ENCODE measurements at regions of chr1 and their contacts with region 1.

Region 1: DNA sequence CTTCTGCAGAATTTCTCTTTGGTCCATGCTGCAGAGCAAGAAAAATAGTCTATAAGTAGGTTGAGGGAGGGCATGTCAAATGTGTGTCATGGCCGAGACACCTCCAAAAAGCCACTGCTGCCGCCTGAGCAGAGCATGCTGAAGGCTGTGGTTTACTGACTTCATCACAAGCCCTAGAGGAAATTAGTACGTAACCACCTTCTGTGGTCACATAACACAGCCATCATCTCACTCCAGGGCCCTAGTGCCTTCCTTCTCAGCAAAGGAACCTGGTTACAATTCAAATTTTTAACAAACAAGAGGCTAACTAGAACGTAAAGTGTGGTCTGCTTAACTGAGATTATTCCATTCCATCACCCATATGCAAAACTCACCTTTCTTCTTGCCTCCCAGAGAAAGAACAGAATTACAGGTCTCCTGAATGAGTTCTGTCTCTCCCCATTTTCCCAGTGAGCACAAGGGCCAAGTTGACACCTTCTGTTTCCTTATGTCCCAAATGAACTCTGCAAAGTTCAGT is at the start of gene PTPN22:
- DNase-seq: peak; percentile 41 to 91 (median 87)
- ATAC-seq: peak; percentile 98
- H3K4me3 ChIP-seq: peak within 1 kb of the TSS; percentile 81
- H3K4me3 Mint-ChIP-seq: peak within 1 kb of the TSS; percentile 82 to 95 (median 92)
- H3K27ac ChIP-seq: peak within 1 kb of the TSS; percentile 87
- H3K27ac Mint-ChIP-seq: peak within 1 kb of the TSS; percentile 94 to 99 (median 98)
- H3K4me1 ChIP-seq: peaks cover 30 to 65% of the 10 kb centered on the region in 2 donors
- H3K4me1 Mint-ChIP-seq: peaks cover 37 to 77% (median 72%) of the 10 kb centered on the region in 7 donors
- H3K27me3 ChIP-seq: no peaks in the 10 kb centered on the region
- H3K27me3 Mint-ChIP-seq: no peaks in the 10 kb centered on the region
- total RNA-seq, gene PTPN22: 22.2 to 76.7 (median 27.5) TPM

Region 2: GRCh38 chr1:113849060-113849459 is 22.6 kb before region 1 on chr1:
- CTCF ChIA-PET with region 1: interaction called, 3 read pairs
- POLR2A ChIA-PET with region 1: no interaction called
- intact Hi-C with region 1: loop called in 1 of 2 experiments (anchors 2 kb)
- DNase-seq: no peak
- ATAC-seq: no peak
- H3K4me3 ChIP-seq: no peak overlapping the region
- H3K4me3 Mint-ChIP-seq: no peak overlapping the region
- H3K27ac ChIP-seq: no peak overlapping the region
- H3K27ac Mint-ChIP-seq: no peak overlapping the region
- H3K4me1 ChIP-seq: peaks cover 8 to 10% of the 10 kb centered on the region in 2 donors
- H3K4me1 Mint-ChIP-seq: peaks cover 8 to 16% (median 14%) of the 10 kb centered on the region in 7 donors
- H3K27me3 ChIP-seq: no peaks in the 10 kb centered on the region
- H3K27me3 Mint-ChIP-seq: no peaks in the 10 kb centered on the region

Region 3: GRCh38 chr1:113887402-113888175 is 15.9 kb after region 1 on chr1 and contains the start of gene BCL2L15:
- CTCF ChIA-PET with region 1: interaction called, 4 read pairs
- POLR2A ChIA-PET with region 1: interaction called, 5 read pairs
- intact Hi-C with region 1: loop called (anchors 1 to 2 kb)
- DNase-seq: no peak
- ATAC-seq: no peak
- H3K4me3 ChIP-seq: no peak within 1 kb of the TSS
- H3K4me3 Mint-ChIP-seq: peak within 1 kb of the TSS in 9 of 10 donors; percentile 8 to 73 (median 52)
- H3K27ac ChIP-seq: peak within 1 kb of the TSS; percentile 9
- H3K27ac Mint-ChIP-seq: peak within 1 kb of the TSS in 8 of 9 donors; percentile 11 to 72 (median 54)
- H3K4me1 ChIP-seq: peaks cover 6 to 10% of the 10 kb centered on the region in 2 donors
- H3K4me1 Mint-ChIP-seq: peaks cover 11 to 38% (median 20%) of the 10 kb centered on the region in 7 donors
- H3K27me3 ChIP-seq: no peaks in the 10 kb centered on the region
- H3K27me3 Mint-ChIP-seq: no peaks in the 10 kb centered on the region
- total RNA-seq, gene BCL2L15: 1.1 to 7.5 (median 1.6) TPM

Region 4: GRCh38 chr1:114389714-114390113 is 518.1 kb after region 1 on chr1:
- CTCF ChIA-PET with region 1: no interaction called
- POLR2A ChIA-PET with region 1: no interaction called
- intact Hi-C with region 1: no loop called
- DNase-seq: no peak
- ATAC-seq: no peak
- H3K4me3 ChIP-seq: no peak overlapping the region
- H3K4me3 Mint-ChIP-seq: no peak overlapping the region
- H3K27ac ChIP-seq: no peak overlapping the region
- H3K27ac Mint-ChIP-seq: no peak overlapping the region
- H3K4me1 ChIP-seq: no peaks in the 10 kb centered on the region
- H3K4me1 Mint-ChIP-seq: no peaks in the 10 kb centered on the region
- H3K27me3 ChIP-seq: no peaks in the 10 kb centered on the region
- H3K27me3 Mint-ChIP-seq: no peaks in the 10 kb centered on the region